HEK293T (cell line): ENCODE measurements at regions of chr18 and their contacts with region 1.

Region 1: GRCh38 chr18:24138789-24139616 is at the start of gene CABYR:
- DNase-seq: peak; percentile 94

Region 2: DNA sequence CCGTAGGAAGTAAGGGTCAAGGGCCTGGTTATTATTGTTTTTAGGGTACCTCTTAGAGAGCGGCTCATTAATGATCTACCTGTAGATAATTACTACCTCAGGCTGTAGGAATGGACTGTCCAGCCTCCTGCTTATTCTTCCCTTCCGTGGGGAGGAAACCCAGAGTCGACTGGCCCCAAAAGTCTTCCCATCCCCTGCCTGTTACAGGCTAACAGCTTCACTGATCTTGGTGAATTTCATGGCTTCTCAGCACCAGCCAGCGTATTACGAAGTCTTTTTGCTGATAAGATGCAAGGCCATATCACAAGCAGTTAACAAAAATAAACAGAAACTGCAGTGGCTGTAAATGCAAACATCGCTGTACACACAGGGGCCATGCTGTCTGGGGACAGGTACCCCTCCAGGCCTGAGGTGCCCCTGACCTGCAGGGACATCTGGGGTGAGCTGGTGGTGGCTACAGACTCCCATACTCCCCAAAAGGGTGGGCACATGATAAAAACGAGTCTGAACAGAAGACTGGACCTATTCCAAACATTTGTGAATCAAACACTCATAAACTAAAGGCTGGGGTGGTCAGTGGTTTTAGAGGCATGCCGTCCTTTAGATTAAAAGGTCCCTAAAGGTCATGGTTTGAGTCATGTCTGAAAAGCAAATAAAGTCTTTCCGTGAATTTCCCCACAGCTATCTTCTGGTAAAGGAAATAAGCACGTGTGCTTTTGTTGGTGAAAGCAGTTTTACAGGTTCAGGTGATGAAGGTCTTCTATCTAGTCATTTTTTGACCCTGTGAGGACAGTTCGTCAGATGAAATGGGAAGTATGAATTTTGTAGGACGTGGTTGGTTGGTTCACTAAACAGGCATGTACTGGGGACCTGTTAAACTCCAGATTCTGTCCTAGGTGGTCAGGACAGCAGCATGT is 87.7 kb before region 1 on chr18:
- CTCF ChIA-PET with region 1: no interaction called
- POLR2A ChIA-PET with region 1: no interaction called
- DNase-seq: no peak

Region 3: DNA sequence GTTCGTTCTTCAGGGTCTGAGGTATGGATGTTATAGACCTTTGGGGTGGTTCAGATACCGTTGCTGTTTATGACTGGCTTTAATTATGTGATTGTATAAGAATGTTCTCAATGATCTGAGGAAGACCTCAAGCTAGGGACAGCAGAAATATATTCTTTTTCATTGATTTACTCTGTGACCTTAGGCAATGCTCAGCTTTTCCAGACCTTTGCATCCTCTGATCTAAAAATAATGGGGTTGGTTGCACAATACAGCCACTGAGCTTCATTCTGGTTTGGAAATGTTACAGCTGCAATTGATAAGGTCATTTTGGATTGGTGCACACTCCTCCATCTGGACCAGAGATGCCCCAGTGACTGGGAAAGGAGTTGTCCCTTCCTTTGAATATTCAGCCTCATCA is 17.4 kb before region 1 on chr18:
- CTCF ChIA-PET with region 1: interaction called, 6 read pairs
- POLR2A ChIA-PET with region 1: interaction called, 11 read pairs
- DNase-seq: no peak

Region 4: GRCh38 chr18:24157855-24158254 is 18.9 kb after region 1 on chr18:
- CTCF ChIA-PET with region 1: no interaction called
- POLR2A ChIA-PET with region 1: interaction called, 14 read pairs
- DNase-seq: no peak